Heart left ventricle (tissue), 16 donors: ENCODE measurements at regions of chr19 and their contacts with region 1.

Region 1: DNA sequence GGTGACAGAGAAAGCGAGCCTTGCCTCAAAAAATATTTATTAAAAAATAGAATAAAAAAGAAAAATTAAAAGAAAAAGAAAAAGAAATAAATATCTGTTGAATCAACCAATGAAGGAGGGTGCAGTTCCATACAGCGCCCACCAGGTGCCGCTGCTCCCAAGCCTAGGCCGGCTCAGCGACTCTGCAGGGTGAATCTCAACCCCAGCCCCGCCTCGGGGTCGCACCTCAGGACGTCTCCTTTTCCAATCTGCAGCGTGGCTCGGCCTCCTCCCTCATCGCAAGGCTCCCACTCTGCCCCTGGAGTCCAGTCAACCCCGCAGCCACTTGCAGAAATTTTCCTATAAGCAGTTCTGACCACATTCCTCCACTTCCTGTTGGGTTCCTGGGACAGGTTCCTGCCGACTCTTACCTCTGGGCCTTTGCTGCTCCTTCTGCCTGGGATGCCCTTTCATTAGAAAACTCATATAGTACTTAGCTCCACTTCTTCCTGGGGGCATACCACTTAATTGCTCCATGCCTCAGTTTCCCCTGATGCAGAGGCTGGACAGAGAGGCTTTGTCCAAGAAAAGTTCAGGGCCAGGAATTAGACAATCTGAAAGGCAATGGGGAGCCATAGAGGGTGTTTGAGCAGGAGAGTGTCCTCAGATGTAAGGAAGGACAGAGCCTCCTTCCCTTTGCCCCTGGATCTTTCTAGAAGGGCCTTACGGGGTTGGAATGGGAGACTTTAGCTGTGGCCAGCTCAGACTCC is 24.3 kb downstream of the NFILZ start:
- DNase-seq: peak in 4 of 5 donors; percentile 27 to 78 (median 56)
- ATAC-seq: peak; percentile 47 to 71 (median 64)
- H3K4me3 ChIP-seq: peak overlapping the region in 4 of 12 donors; percentile 19 to 40 (median 36)
- H3K27ac ChIP-seq: no peak overlapping the region
- H3K4me1 ChIP-seq: peaks cover 0 to 22% (median 0%) of the 10 kb centered on the region in 12 donors
- H3K27me3 ChIP-seq: peaks cover 0 to 40% (median 6%) of the 10 kb centered on the region in 9 donors
- CTCF ChIP-seq: peak; percentile 92 to 99 (median 98)
- POLR2A ChIP-seq: no peak

Region 2: DNA sequence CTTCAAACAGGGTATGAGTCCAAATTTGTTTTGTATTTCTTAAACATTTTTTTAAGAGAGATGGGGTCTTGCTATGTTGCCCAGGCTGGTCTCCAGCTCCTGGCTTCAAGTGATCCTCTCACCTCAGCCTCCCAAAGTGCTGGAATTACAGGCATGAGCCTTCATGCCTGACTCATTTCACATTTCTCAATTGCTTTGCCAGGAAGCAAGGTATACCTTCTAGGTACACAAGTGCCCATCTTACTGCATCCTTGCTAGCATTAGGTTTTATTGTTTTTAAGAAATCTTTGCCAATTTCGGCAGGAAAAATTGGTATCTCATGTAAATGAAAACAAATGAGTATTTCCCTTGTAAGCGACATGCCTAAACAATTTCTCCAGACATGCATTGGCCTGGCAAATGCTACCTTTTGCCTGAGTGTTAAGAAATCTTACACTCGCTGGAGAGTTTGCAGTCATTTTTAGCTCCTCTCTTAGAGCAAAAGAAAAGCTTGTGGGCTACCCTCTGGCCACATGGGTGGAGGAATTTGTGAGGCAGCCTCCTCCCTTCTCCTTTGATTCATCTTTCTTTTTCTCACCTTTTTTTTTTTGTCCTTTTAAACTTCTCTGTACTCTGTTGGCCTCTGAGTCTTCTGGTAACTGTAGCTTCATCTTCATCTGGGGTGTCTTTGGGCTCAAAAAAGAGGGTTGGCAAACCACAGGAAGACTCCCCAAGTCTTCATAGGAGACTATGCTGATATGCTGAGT is 10.9 kb after region 1 on chr19:
- intact Hi-C with region 1: no loop called
- DNase-seq: no peak
- ATAC-seq: no peak
- H3K4me3 ChIP-seq: no peak overlapping the region
- H3K27ac ChIP-seq: no peak overlapping the region
- H3K4me1 ChIP-seq: peaks cover 0 to 16% (median 0%) of the 10 kb centered on the region in 12 donors
- H3K27me3 ChIP-seq: peaks cover 0 to 44% (median 0%) of the 10 kb centered on the region in 9 donors
- CTCF ChIP-seq: no peak
- POLR2A ChIP-seq: no peak

Region 3: DNA sequence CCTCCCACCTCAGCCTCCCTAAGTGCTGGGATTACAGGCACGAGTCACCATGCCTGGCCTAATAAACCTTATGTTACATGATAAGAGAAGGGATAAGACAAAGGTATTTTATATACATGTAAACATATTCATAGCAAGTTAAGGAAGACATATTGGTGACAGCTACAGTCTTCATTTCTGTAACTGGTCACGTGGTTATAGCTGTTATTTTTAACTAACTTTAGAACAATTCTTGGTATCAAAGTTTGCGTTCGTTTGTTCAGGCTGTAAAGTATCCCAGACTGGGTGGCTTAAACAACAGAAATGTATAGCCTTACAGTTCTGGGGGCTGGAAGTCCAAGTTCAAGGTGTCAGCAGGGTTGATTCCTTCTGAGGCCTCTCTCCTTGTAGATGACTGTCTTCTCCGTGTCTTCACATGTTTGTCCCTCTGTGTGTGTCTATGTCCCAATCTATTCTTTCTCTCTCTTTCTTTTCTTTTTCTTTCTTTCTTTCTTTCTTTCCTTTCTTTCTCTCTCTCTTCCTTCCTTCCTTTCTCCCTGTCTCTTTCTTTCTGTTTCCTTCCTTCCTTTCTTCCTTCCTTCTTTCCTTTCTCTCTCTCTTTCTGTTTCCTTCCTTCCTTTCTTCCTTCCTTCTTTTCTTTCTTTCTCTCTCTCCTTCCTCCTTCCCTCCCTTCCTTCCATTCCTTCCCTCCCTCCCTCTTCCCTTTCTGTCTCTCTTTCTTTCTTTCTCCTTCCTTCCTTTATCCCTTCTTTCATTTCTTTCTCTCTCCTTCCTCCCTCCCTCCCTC is 36.2 kb after region 1 on chr19:
- intact Hi-C with region 1: loop called in 2 of 10 experiments (anchors 2 to 5 kb)
- DNase-seq: no peak
- ATAC-seq: no peak
- H3K4me3 ChIP-seq: no peak overlapping the region
- H3K27ac ChIP-seq: no peak overlapping the region
- H3K4me1 ChIP-seq: no peaks in the 10 kb centered on the region
- H3K27me3 ChIP-seq: peaks cover 0 to 49% (median 0%) of the 10 kb centered on the region in 9 donors
- CTCF ChIP-seq: no peak
- POLR2A ChIP-seq: no peak

Region 4: GRCh38 chr19:8697671-8698432 is 43.1 kb after region 1 on chr19:
- intact Hi-C with region 1: loop called in 2 of 10 experiments (anchors 2 to 5 kb)
- DNase-seq: no peak
- ATAC-seq: peak in 1 of 4 donors; percentile 21
- H3K4me3 ChIP-seq: no peak overlapping the region
- H3K27ac ChIP-seq: no peak overlapping the region
- H3K4me1 ChIP-seq: peaks cover 0 to 6% (median 0%) of the 10 kb centered on the region in 12 donors
- H3K27me3 ChIP-seq: peaks cover 2 to 71% (median 9%) of the 10 kb centered on the region in 9 donors
- CTCF ChIP-seq: peak in 2 of 12 donors; percentile 15 to 23
- POLR2A ChIP-seq: no peak

Region 5: DNA sequence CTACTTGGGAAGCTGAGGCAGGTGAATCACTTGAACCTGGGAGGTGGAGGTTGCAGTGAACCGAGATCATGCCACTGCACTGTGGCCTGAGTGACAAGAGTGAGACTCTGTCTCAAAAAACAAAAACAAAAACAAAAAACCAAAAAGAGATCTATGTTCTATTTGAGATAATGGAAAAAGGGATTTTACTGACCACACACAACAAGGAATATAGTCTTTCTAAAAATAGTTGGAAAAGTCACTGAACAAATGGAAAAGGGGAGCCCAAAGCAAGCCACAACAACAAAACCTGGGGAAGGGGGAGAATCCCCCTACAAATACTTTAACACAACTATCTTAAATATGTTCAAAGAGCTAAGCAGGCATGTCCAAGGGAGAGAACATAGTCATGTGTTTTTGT is 140.1 kb after region 1 on chr19:
- intact Hi-C with region 1: no loop called
- DNase-seq: no peak
- ATAC-seq: no peak
- H3K4me3 ChIP-seq: no peak overlapping the region
- H3K27ac ChIP-seq: no peak overlapping the region
- H3K4me1 ChIP-seq: no peaks in the 10 kb centered on the region
- H3K27me3 ChIP-seq: no peaks in the 10 kb centered on the region
- CTCF ChIP-seq: no peak
- POLR2A ChIP-seq: no peak

Region 6: DNA sequence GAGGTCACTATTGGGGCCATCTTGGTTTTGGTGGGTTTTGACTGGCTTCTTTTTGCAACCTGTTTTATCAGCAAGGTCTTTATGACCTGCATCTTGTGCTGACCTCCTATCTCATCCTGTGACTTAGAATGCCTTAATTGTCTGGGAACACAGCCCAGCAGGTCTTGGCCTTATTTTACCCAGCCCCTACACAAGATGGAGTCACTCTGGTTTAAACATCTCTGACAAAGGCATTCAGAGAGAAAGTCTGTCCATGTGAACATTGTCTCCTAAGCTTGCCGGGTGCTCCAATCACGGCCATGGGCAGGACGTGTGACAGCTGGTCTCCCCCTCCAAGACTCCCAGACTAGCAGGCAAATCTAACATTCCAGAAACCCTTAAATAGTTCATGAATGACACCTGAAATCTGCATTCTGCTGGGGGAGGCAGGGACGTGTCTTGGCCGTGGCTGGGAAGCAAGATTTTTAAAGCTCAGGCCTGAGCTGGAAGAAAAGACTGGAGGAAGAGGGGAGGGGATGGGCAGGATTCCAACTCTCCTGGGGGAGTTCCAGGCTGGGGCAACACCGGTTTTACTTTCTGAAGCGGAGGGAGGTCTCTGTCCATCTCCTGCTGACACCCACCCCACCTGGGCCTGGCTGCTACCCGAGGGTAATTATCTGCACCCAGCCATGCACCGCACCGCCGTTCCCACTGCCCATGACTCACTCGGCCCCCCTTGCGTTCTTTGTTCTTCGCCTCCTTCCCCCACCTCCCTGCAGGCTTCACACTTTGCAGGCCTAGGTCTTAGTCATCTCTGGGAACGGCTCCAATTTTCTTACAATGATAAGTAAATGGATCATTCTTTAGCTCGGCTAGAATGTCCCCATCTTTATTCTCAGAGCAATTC is 420.5 kb after region 1 on chr19:
- intact Hi-C with region 1: loop called (anchors 1 to 2 kb)
- DNase-seq: peak; percentile 53 to 83 (median 66)
- ATAC-seq: peak; percentile 42 to 98 (median 94)
- H3K4me3 ChIP-seq: no peak overlapping the region
- H3K27ac ChIP-seq: peak overlapping the region in 1 of 12 donors; percentile 48
- H3K4me1 ChIP-seq: peaks cover 0 to 9% (median 7%) of the 10 kb centered on the region in 12 donors
- H3K27me3 ChIP-seq: no peaks in the 10 kb centered on the region
- CTCF ChIP-seq: no peak
- POLR2A ChIP-seq: no peak